Heart right ventricle (tissue), 16 donors: ENCODE measurements at regions of chr20 and their contacts with region 1.

Region 1: DNA sequence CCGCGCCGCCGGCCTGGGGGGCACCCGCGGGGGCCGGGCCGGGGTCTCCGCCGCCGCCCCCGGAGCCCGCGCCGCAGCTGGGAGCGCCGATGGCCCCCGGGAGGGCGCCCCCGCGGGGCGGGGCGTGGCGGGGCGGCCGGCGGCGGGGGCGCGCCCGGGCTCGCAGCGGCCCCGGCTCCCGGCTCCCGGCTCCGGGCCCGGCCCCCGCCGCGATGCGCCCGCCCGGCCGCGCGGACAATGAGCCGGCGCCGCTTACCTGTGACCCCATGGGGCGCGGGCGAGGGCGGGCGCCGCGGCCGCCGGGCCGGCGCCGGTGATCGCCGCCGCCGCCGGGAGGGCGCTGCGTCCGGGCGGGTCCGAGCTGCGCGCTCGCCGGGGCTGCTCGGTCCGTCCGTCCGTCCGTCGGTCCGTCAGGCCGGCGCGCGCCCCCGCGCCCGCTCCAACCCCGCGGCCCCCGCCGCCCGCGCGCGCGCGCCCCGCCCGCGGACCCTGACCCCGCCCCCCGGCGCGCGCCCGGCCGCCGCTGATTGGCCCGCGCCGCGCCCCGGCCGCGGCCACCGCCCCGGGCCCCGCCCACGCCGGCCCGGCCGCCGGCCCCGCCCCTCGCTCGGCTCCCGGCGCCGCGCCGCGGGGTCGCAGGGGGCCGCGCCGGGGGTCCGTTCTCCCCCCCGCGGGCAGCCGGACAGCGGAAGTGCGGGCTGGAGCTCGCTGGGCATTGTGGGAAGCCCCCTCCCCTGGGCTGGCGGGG is at the start of gene ZBTB46:
- DNase-seq: peak; percentile 62 to 76
- ATAC-seq: peak in 5 of 8 donors; percentile 7 to 51 (median 36)
- H3K4me3 ChIP-seq: peak within 1 kb of the TSS; percentile 42 to 97 (median 70)
- H3K27ac ChIP-seq: peak within 1 kb of the TSS; percentile 80 to 98 (median 90)
- H3K4me1 ChIP-seq: peaks cover 26 to 75% (median 66%) of the 10 kb centered on the region in 9 donors
- H3K27me3 ChIP-seq: peaks cover 0 to 63% (median 0%) of the 10 kb centered on the region in 7 donors
- CTCF ChIP-seq: no peak
- total RNA-seq, gene ZBTB46: 10.2 to 25.4 (median 14.7) TPM

Region 2: DNA sequence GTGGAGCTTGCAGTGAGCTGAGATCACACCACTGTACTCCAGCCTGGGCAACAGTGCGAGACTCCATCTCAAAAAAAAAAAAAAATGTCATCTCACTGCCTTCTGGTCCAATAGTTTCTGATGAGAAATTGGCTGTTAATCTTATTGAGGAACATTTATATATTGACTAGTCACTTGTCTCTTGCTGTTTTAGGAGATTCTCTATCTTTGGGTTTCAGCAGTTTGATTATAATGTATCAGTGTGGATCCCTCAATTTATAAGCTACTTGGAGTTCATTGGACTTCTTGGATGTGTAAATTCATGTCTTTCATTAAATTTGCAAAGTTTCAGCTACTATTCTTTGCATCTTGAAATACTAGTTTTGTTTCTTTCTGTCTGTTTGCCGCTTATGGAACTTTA is 112.0 kb before region 1 on chr20:
- intact Hi-C with region 1: no loop called
- DNase-seq: no peak
- ATAC-seq: no peak
- H3K4me3 ChIP-seq: no peak overlapping the region
- H3K27ac ChIP-seq: no peak overlapping the region
- H3K4me1 ChIP-seq: no peaks in the 10 kb centered on the region
- H3K27me3 ChIP-seq: no peaks in the 10 kb centered on the region
- CTCF ChIP-seq: no peak

Region 3: GRCh38 chr20:63782051-63782471 is 49.0 kb before region 1 on chr20:
- intact Hi-C with region 1: loop called in 2 of 10 experiments (anchors 5 kb)
- DNase-seq: no peak
- ATAC-seq: no peak
- H3K4me3 ChIP-seq: no peak overlapping the region
- H3K27ac ChIP-seq: no peak overlapping the region
- H3K4me1 ChIP-seq: peaks cover 3 to 24% (median 15%) of the 10 kb centered on the region in 9 donors
- H3K27me3 ChIP-seq: no peaks in the 10 kb centered on the region
- CTCF ChIP-seq: no peak

Region 4: DNA sequence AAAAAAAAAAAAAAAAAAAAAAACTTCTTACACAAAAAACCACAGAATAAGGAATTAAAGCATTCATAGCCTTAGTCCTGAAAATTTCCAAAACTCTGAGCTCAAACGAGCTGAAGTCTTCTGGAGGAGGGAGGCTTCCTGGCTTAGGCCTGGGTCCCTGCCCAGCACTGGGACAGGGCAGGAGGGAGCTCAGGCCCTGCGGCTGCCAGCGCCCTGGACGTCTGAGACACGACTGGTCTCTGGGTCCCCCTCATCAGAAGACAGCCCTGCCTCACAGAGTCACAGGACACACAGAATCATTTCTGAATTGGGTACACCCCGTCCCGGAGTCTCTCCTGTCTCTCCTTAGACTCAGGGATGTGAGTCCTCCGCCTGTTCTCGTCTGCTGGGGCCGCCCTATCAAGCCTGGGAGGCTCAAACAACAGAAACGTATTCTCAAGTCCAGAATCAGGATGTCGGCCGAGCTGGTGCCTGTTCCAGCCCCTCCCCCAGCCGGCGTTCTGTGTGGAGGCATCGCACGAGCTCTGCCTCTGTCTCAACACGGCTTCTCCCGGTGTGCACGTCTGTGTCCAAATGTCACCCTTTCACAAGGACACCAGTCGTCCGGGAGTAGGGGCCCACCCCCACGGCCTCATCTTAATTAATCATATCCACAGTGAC is 39.4 kb before region 1 on chr20:
- intact Hi-C with region 1: loop called in 3 of 10 experiments (anchors 5 kb)
- DNase-seq: peak; percentile 64 to 66
- ATAC-seq: peak in 7 of 8 donors; percentile 19 to 55 (median 37)
- H3K4me3 ChIP-seq: peak overlapping the region in 2 of 10 donors; percentile 12 to 15
- H3K27ac ChIP-seq: peak overlapping the region; percentile 22 to 84 (median 77)
- H3K4me1 ChIP-seq: peaks cover 18 to 74% (median 54%) of the 10 kb centered on the region in 9 donors
- H3K27me3 ChIP-seq: peaks cover 0 to 4% (median 0%) of the 10 kb centered on the region in 7 donors
- CTCF ChIP-seq: no peak

Region 5: DNA sequence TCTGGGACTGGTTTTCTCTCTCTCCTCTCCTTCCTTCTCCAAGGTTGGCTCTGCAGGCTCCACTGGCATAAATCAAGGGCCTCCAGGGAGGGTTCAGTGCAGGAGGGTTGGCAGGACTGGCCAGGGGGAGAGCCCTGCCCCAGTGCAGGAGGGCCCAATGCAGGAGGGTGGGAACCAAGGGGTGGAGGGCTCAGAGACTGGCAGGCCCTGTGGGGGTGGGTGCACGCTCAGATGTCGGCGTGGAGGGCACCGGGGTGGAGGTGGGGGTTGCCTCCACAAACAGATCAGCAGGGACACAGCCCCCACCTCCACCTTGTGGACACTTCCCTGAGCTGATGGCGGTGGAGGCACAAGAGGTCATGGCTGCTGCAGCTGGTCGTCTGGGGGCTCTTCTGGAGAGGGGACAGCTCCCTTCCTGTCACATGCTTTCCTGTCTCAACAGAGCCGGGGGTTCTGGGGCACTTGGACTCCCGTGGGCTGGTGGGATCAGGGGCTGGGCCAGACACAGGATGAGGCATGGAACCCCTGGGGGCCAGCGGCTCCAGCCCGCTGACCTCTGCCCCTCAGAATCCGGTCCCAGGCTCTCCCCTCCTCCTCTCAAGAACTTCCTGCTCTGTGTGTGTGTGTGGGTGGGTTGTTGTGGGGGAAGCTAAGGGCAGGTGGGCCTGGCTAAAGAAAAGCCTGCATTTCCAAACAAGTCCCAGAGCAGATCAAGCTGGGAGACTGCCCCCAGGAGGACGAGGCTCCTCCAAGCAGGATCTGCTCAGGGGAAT is 27.6 kb after region 1 on chr20:
- intact Hi-C with region 1: loop called in 5 of 10 experiments (anchors 1 to 5 kb)
- DNase-seq: peak; percentile 73 to 85
- ATAC-seq: peak; percentile 36 to 78 (median 62)
- H3K4me3 ChIP-seq: peak overlapping the region in 2 of 10 donors; percentile 14 to 28
- H3K27ac ChIP-seq: peak overlapping the region; percentile 48 to 97 (median 82)
- H3K4me1 ChIP-seq: peaks cover 38 to 78% (median 70%) of the 10 kb centered on the region in 9 donors
- H3K27me3 ChIP-seq: peaks cover 0 to 12% (median 0%) of the 10 kb centered on the region in 7 donors
- CTCF ChIP-seq: peak in 7 of 9 donors; percentile 26 to 64 (median 51)